A673 (cell line): ENCODE measurements at regions of chr1 and their contacts with region 1.

Region 1: DNA sequence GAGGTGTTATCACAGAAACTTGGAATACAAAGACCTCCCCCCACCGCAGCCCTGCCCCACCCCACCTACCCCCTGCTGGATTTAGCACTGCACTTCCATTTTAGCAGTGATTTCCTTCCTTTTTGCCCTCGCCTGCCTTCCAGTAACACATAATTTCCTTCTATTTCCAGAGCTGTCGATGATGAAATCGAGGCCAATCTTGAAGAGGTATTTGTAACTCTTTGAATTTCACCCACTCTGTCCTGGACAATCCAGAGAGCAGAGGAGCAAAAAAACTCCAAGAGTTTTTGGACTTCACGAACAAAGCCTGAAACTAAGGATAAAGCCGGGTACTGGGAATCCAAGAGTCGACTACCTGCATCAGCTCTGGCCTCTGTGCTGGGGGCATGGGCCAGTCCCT is 49.1 kb downstream of the CAPN2 start:
- DNase-seq: no peak
- H3K4me3 ChIP-seq: no peak overlapping the region
- H3K27ac ChIP-seq: no peak overlapping the region
- H3K4me1 ChIP-seq: no peaks in the 10 kb centered on the region
- H3K27me3 ChIP-seq: no peaks in the 10 kb centered on the region
- CTCF ChIP-seq: no peak

Region 2: DNA sequence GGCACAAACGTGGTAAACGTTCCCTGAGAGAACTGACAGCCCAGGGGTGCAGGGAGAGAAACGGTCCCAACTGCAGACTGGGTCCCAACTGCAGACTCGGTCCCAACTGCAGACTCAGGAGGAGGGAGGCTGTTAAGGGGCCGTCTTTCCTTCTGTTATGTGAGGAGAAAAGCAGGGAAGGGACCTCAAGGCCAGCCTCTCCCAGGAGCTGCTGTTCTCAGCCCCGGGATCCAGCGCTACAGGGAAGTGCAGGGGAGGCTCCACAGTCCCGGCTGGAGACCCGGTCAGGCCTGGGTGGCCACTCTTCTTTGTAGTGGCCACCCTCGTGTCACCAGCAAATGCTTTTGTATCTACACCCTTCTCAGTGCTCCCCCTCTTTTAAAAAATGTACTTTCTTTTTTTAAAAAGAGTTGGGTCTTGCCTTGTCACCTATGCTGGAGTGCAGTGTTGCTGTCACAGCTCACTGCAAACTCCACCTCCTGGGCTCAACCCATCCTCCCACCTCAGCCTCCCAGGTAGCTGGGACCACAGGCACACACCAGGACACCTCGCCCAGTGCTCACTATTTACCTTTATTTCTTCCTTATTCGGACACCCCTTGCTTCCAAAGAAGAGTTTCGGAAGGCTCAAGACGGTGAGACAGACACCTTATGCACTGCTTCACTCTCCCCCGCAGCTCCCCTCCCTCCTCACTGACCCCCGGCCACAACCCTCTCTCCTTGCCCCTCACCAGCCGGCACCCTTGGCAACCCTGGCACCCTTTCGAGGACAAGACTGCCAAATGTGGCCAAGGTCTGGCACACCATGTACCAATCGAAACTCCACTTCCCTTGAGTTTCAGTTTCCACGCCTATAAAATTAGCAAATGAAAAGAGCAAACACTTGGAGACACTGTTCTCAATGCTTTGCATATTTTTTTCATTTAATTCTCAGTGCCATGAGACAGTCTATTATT is 27.2 kb before region 1 on chr1:
- CTCF ChIA-PET with region 1: no interaction called
- POLR2A ChIA-PET with region 1: interaction called, 24 read pairs
- intact Hi-C with region 1: no loop called
- DNase-seq: no peak
- H3K4me3 ChIP-seq: no peak overlapping the region
- H3K27ac ChIP-seq: peak overlapping the region; percentile 18
- H3K4me1 ChIP-seq: peaks cover 38% of the 10 kb centered on the region
- H3K27me3 ChIP-seq: no peaks in the 10 kb centered on the region
- CTCF ChIP-seq: no peak